ENCODE measurements at regions of chr3 and their contacts with region 1.

Region 1: GRCh38 chr3:133578548-133579191 is 5.2 kb downstream of the CDV3 start:
- DNase-seq: peak; percentile 68
- H3K4me3 Mint-ChIP-seq: peak overlapping the region; percentile 19
- H3K27ac Mint-ChIP-seq: no peak overlapping the region
- H3K4me1 Mint-ChIP-seq: peaks cover 15% of the 10 kb centered on the region
- H3K27me3 Mint-ChIP-seq: no peaks in the 10 kb centered on the region
- CTCF ChIP-seq: peak; percentile 63

Region 2: GRCh38 chr3:133448478-133449122 is 130.1 kb before region 1 on chr3:
- CTCF ChIA-PET with region 1: interaction called, 36 read pairs
- POLR2A ChIA-PET with region 1: interaction called, 5 read pairs
- intact Hi-C with region 1: loop called (anchors 1 kb)
- DNase-seq: no peak
- H3K4me3 Mint-ChIP-seq: no peak overlapping the region
- H3K27ac Mint-ChIP-seq: no peak overlapping the region
- H3K4me1 Mint-ChIP-seq: peaks cover 12% of the 10 kb centered on the region
- H3K27me3 Mint-ChIP-seq: peaks cover 12% of the 10 kb centered on the region
- CTCF ChIP-seq: no peak

Region 3: DNA sequence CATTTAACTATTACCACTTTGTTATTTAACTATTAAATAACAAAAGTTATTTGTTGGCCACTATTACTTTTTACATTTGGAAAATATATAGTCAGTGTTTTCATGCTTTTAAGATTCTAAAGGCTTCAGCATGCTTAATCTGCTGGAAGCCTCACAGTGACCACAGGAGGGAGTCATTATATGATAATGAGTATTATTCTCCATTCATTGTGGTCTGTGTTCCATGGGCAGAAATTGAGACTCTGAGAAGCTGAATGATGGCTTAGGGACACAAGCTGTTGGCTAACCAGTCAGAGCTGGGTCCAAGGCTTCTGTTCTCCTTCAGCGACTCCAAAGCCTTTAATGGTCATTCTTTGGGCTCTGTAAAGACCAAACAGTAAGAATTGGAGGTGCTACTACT is 114.1 kb before region 1 on chr3:
- CTCF ChIA-PET with region 1: interaction called, 18 read pairs
- POLR2A ChIA-PET with region 1: interaction called, 7 read pairs
- intact Hi-C with region 1: loop called (anchors 1 kb)
- DNase-seq: peak; percentile 48
- H3K4me3 Mint-ChIP-seq: no peak overlapping the region
- H3K27ac Mint-ChIP-seq: no peak overlapping the region
- H3K4me1 Mint-ChIP-seq: peaks cover 8% of the 10 kb centered on the region
- H3K27me3 Mint-ChIP-seq: no peaks in the 10 kb centered on the region
- CTCF ChIP-seq: peak; percentile 35

Region 4: DNA sequence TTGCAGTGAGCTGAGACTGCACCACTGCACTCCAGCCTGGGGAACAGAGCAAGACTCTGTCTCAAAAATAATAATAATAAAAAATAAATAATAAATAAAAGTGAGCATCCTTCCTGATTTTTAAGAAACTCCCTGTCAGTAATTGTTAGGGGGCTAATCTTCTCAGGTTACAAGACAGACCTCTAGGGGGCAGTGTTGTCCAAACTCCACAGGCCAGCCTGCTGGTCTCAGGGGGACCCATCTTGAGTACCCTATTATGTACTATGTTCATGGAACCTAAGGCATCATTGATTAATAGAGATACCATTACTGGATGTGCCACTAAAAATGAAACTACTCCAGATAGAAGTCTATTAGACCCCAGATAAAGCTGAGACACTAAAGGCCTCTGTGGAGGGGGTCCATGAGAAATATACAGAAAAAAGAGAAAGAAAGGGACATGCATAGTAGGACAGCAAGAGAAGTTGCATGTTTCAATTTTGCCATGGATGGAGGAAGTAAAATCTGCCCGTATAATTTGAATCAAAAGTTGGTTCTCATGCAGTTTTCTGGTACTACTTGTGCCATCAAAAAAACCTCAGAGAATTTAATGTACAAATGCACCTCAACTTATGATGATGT is 90.6 kb before region 1 on chr3:
- CTCF ChIA-PET with region 1: interaction called, 86 read pairs
- POLR2A ChIA-PET with region 1: interaction called, 25 read pairs
- intact Hi-C with region 1: loop called (anchors 1 kb)
- DNase-seq: peak; percentile 58
- H3K4me3 Mint-ChIP-seq: no peak overlapping the region
- H3K27ac Mint-ChIP-seq: no peak overlapping the region
- H3K4me1 Mint-ChIP-seq: peaks cover 19% of the 10 kb centered on the region
- H3K27me3 Mint-ChIP-seq: no peaks in the 10 kb centered on the region
- CTCF ChIP-seq: peak; percentile 66

Region 5: GRCh38 chr3:133535971-133536634 is 42.6 kb before region 1 on chr3:
- CTCF ChIA-PET with region 1: interaction called, 10 read pairs
- POLR2A ChIA-PET with region 1: interaction called, 57 read pairs
- intact Hi-C with region 1: loop called (anchors 2 kb)
- DNase-seq: peak; percentile 93
- H3K4me3 Mint-ChIP-seq: peak overlapping the region; percentile 2
- H3K27ac Mint-ChIP-seq: peak overlapping the region; percentile 70
- H3K4me1 Mint-ChIP-seq: peaks cover 21% of the 10 kb centered on the region
- H3K27me3 Mint-ChIP-seq: no peaks in the 10 kb centered on the region
- CTCF ChIP-seq: no peak